ENCODE measurements at regions of chr9 and their contacts with region 1.

Region 1: GRCh38 chr9:71911253-71912074 is at the start of gene C9orf85:
- DNase-seq: peak; percentile 94 to 98
- ATAC-seq: peak; percentile 90 to 98 (median 91)
- H3K4me3 ChIP-seq: peak within 1 kb of the TSS; percentile 62
- H3K4me3 Mint-ChIP-seq: peak within 1 kb of the TSS; percentile 100
- H3K27ac ChIP-seq: peak within 1 kb of the TSS; percentile 80
- H3K27ac Mint-ChIP-seq: peak within 1 kb of the TSS; percentile 97
- H3K4me1 ChIP-seq: peaks cover 12% of the 10 kb centered on the region
- H3K4me1 Mint-ChIP-seq: peaks cover 61 to 70% of the 10 kb centered on the region in 2 donors
- H3K27me3 ChIP-seq: no peaks in the 10 kb centered on the region
- H3K27me3 Mint-ChIP-seq: no peaks in the 10 kb centered on the region
- CTCF ChIP-seq: no peak
- total RNA-seq, gene C9orf85: 5.6 to 11.1 (median 9.2) TPM

Region 2: GRCh38 chr9:71863631-71864030 is 47.8 kb before region 1 on chr9:
- intact Hi-C with region 1: loop called (anchors 5 kb)
- DNase-seq: no peak
- ATAC-seq: no peak
- H3K4me3 ChIP-seq: no peak overlapping the region
- H3K4me3 Mint-ChIP-seq: no peak overlapping the region
- H3K27ac ChIP-seq: no peak overlapping the region
- H3K27ac Mint-ChIP-seq: no peak overlapping the region
- H3K4me1 ChIP-seq: no peaks in the 10 kb centered on the region
- H3K4me1 Mint-ChIP-seq: peaks cover 3 to 8% of the 10 kb centered on the region in 2 donors
- H3K27me3 ChIP-seq: no peaks in the 10 kb centered on the region
- H3K27me3 Mint-ChIP-seq: no peaks in the 10 kb centered on the region
- CTCF ChIP-seq: no peak

Region 3: GRCh38 chr9:71897577-71897976 is 13.9 kb before region 1 on chr9:
- intact Hi-C with region 1: loop called (anchors 2 kb)
- DNase-seq: peak in 1 of 2 donors; percentile 63
- ATAC-seq: peak; percentile 76 to 84 (median 81)
- H3K4me3 ChIP-seq: peak overlapping the region; percentile 5
- H3K4me3 Mint-ChIP-seq: peak overlapping the region; percentile 87
- H3K27ac ChIP-seq: peak overlapping the region; percentile 80
- H3K27ac Mint-ChIP-seq: peak overlapping the region; percentile 87 to 97
- H3K4me1 ChIP-seq: peaks cover 33% of the 10 kb centered on the region
- H3K4me1 Mint-ChIP-seq: peaks cover 82 to 85% of the 10 kb centered on the region in 2 donors
- H3K27me3 ChIP-seq: no peaks in the 10 kb centered on the region
- H3K27me3 Mint-ChIP-seq: no peaks in the 10 kb centered on the region
- CTCF ChIP-seq: no peak

Region 4: DNA sequence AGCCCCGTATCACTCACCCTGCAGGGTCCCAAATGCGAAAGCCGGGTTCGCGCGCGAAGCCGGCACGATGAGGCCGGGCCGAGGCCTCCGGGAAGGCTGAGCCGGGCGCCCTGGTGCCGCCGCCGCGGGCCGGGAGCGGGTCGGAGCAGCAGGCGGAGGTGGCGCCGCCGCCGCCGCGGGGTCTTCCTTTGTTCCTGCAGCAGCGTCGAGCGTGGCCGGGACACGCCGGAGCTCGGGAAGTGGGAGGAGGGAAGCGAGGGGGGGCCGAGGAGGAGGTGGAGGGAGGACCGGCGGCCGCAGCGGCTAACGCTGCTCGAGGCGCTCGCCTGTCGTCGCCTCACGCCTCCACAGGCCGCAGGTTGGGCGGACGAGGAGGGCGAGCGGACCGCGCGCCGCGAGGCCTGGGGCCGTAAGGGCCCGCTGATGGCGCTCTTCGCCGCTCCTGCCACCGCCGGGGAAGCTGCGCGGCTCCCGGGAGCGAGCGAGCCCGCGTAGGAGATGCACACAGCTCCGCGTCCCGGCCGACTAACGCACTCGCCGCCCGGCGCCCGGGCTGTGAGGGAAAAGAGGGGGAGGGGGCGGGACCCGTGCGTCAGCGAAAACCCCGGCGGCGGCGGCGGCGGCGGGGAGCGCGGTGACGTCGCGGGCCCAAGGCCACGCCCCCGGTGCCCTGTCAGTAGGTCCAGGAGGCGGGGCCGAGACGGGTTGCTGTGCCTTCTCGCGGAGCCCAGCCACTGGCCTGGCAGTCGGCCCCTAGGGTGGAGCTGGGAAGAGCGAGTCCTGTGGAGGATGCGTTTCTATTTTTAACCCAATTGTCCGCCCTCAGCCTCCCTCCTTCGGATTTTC is 453.4 kb after region 1 on chr9 and contains the start of gene ZFAND5:
- intact Hi-C with region 1: loop called (anchors 5 kb)
- DNase-seq: peak; percentile 97
- ATAC-seq: peak; percentile 80 to 93 (median 82)
- H3K4me3 ChIP-seq: peak within 1 kb of the TSS; percentile 76
- H3K4me3 Mint-ChIP-seq: peak within 1 kb of the TSS; percentile 94
- H3K27ac ChIP-seq: peak within 1 kb of the TSS; percentile 99
- H3K27ac Mint-ChIP-seq: peak within 1 kb of the TSS; percentile 99
- H3K4me1 ChIP-seq: peaks cover 14% of the 10 kb centered on the region
- H3K4me1 Mint-ChIP-seq: peaks cover 47 to 51% of the 10 kb centered on the region in 2 donors
- H3K27me3 ChIP-seq: no peaks in the 10 kb centered on the region
- H3K27me3 Mint-ChIP-seq: no peaks in the 10 kb centered on the region
- CTCF ChIP-seq: no peak
- total RNA-seq, gene ZFAND5: 307 to 450 (median 318) TPM